ENCODE measurements at regions of chr6 and their contacts with region 1.

Region 1: DNA sequence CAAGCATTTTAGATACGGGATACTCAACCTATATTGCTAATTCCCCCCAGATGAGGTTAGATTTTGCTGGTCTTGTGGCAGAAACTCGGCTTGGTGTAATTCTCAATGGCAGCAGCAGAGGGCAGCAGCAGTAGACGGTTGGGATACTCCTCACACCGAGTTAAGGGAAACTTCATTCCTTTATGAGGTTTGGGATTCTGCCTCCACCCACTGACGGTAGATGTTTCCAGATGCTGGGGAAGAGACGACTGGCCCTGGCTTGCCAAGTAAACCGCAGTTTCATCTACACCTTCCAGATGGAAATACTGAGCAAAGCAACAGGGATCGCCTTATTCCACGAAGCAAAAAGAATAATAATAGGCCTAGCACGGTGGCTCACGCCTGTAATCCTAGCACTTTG is 8.2 kb upstream of the TBC1D7 start:
- DNase-seq: peak; percentile 72
- ATAC-seq: peak; percentile 73
- H3K4me3 Mint-ChIP-seq: no peak overlapping the region
- H3K27ac Mint-ChIP-seq: no peak overlapping the region
- H3K4me1 Mint-ChIP-seq: peaks cover 51% of the 10 kb centered on the region
- H3K27me3 Mint-ChIP-seq: no peaks in the 10 kb centered on the region
- CTCF ChIP-seq: no peak

Region 2: GRCh38 chr6:13355043-13355951 is 18.7 kb after region 1 on chr6:
- CTCF ChIA-PET with region 1: interaction called, 11 read pairs
- POLR2A ChIA-PET with region 1: interaction called, 11 read pairs
- intact Hi-C with region 1: loop called (anchors 1 kb)
- DNase-seq: no peak
- ATAC-seq: peak; percentile 46
- H3K4me3 Mint-ChIP-seq: peak overlapping the region; percentile 70
- H3K27ac Mint-ChIP-seq: peak overlapping the region; percentile 92
- H3K4me1 Mint-ChIP-seq: peaks cover 70% of the 10 kb centered on the region
- H3K27me3 Mint-ChIP-seq: no peaks in the 10 kb centered on the region
- CTCF ChIP-seq: no peak

Region 3: GRCh38 chr6:13427801-13428582 is 91.4 kb after region 1 on chr6:
- CTCF ChIA-PET with region 1: interaction called, 3 read pairs
- POLR2A ChIA-PET with region 1: no interaction called
- intact Hi-C with region 1: loop called (anchors 1 kb)
- DNase-seq: peak; percentile 58
- ATAC-seq: peak; percentile 86
- H3K4me3 Mint-ChIP-seq: peak overlapping the region; percentile 80
- H3K27ac Mint-ChIP-seq: peak overlapping the region; percentile 95
- H3K4me1 Mint-ChIP-seq: peaks cover 68% of the 10 kb centered on the region
- H3K27me3 Mint-ChIP-seq: no peaks in the 10 kb centered on the region
- CTCF ChIP-seq: no peak

Region 4: GRCh38 chr6:13538084-13538483 is 201.5 kb after region 1 on chr6:
- CTCF ChIA-PET with region 1: interaction called, 12 read pairs
- POLR2A ChIA-PET with region 1: no interaction called
- intact Hi-C with region 1: loop called (anchors 1 kb)
- DNase-seq: no peak
- ATAC-seq: peak; percentile 58
- H3K4me3 Mint-ChIP-seq: no peak overlapping the region
- H3K27ac Mint-ChIP-seq: no peak overlapping the region
- H3K4me1 Mint-ChIP-seq: peaks cover 14% of the 10 kb centered on the region
- H3K27me3 Mint-ChIP-seq: no peaks in the 10 kb centered on the region
- CTCF ChIP-seq: no peak

Measured in activated B cell treated with CpG ODN at 0.5 μM for 24 hours (primary cell).